Ovary (tissue), 10 donors: ENCODE measurements at regions of chr18 and their contacts with region 1.

Region 1: DNA sequence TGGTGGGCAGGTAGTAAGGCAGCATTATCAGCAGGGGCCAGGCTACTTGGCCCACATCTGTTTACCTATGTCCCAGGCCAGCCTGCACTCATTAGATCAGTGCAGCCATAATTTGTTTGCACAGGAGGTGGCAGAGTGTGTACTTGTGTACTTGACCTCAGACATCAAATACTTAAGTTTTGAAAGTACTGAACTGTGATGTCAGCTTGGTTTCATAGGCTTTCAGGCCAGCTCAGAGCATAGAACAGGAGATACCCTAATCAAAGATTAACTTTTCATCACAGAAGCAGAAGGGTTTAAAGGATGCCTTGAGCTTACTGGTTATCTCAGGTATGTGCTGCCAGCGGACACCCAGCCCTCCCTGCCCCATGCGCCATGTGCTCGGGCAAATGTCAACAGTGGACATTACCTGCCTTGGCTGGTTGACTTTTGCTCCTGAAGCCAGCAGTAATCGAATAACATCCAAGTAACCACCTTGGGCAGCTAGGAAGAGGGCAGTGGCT is 33.2 kb downstream of the ANKRD29 start:
- DNase-seq: no peak
- H3K4me3 ChIP-seq: no peak overlapping the region
- H3K27ac ChIP-seq: no peak overlapping the region
- H3K4me1 ChIP-seq: peaks cover 2% of the 10 kb centered on the region
- H3K27me3 ChIP-seq: no peaks in the 10 kb centered on the region
- CTCF ChIP-seq: no peak
- EP300 ChIP-seq: no peak
- POLR2A ChIP-seq: no peak

Region 2: GRCh38 chr18:23166891-23167541 is 462.5 kb before region 1 on chr18:
- intact Hi-C with region 1: no loop called
- DNase-seq: no peak
- H3K4me3 ChIP-seq: no peak overlapping the region
- H3K27ac ChIP-seq: no peak overlapping the region
- H3K4me1 ChIP-seq: peaks cover 3% of the 10 kb centered on the region
- H3K27me3 ChIP-seq: no peaks in the 10 kb centered on the region
- CTCF ChIP-seq: no peak
- EP300 ChIP-seq: no peak
- POLR2A ChIP-seq: no peak

Region 3: GRCh38 chr18:23689031-23689615 is 59.6 kb after region 1 on chr18 and contains the start of gene LAMA3:
- intact Hi-C with region 1: loop called in 3 of 4 experiments (anchors 5 to 10 kb)
- DNase-seq: peak; percentile 63 to 77 (median 68)
- H3K4me3 ChIP-seq: peak within 1 kb of the TSS; percentile 66
- H3K27ac ChIP-seq: peak within 1 kb of the TSS; percentile 32 to 40
- H3K4me1 ChIP-seq: peaks cover 3% of the 10 kb centered on the region
- H3K27me3 ChIP-seq: no peaks in the 10 kb centered on the region
- CTCF ChIP-seq: peak in 2 of 3 donors; percentile 19 to 23
- EP300 ChIP-seq: no peak
- POLR2A ChIP-seq: peak; percentile 26
- total RNA-seq, gene LAMA3: 7.4 to 44.9 (median 14.8) TPM